HEK293 (cell line): ENCODE measurements at regions of chr2 and their contacts with region 1.

Region 1: DNA sequence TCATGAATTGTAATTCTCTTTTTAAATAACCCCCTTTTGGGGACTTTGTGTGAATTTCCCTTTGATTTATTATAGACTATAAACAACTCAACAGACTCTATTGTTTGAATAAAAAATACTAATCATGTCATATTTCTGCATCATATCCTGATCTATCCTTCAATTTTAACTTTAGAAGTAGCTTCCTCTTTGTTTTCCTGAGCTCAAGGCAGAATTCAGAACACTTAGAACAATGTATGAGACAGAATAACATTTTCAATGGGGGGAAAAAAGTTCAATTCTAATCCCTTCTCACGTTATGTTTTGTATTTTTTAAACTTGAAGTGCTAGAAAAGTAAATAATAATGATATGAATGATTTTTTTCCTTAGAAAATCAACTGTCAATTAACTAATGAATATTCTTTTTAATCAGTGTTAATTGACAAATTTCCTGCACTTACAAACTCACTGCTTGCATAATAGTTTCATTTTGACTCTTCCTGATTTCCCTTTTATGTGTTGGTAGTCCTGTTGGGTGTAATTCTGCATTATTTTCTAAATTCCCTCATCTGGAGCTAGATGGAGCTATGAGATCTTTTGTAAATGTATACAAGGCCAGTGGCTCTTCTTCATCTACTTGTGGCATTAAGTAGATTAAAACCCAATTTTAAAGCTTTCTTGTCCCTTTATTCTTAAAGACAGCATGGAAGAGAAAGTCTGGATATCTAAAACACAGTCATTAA is 326.1 kb downstream of the PARD3B start:
- H3K4me3 ChIP-seq: no peak overlapping the region
- H3K27ac ChIP-seq: no peak overlapping the region
- H3K4me1 ChIP-seq: peaks cover 10% of the 10 kb centered on the region
- CTCF ChIP-seq: peak; percentile 33; the same call in 1 of the 2 replicates

Region 2: GRCh38 chr2:204691911-204692510 is 179.4 kb before region 1 on chr2:
- CTCF ChIA-PET with region 1: no interaction called
- POLR2A ChIA-PET with region 1: no interaction called
- H3K4me3 ChIP-seq: no peak overlapping the region
- H3K27ac ChIP-seq: no peak overlapping the region
- H3K4me1 ChIP-seq: no peaks in the 10 kb centered on the region
- CTCF ChIP-seq: 0 out of 2 replicates have a peak, but pooled peaks have one; percentile 24

Region 3: GRCh38 chr2:205680067-205680466 is 808.7 kb after region 1 on chr2:
- CTCF ChIA-PET with region 1: interaction called, 14 read pairs
- POLR2A ChIA-PET with region 1: no interaction called
- H3K4me3 ChIP-seq: no peak overlapping the region
- H3K27ac ChIP-seq: no peak overlapping the region; the same call in 1 of the 2 replicates
- H3K4me1 ChIP-seq: peaks cover 22% of the 10 kb centered on the region
- CTCF ChIP-seq: peak; percentile 83